ENCODE measurements at regions of chr1 and their contacts with region 1.

Region 1: DNA sequence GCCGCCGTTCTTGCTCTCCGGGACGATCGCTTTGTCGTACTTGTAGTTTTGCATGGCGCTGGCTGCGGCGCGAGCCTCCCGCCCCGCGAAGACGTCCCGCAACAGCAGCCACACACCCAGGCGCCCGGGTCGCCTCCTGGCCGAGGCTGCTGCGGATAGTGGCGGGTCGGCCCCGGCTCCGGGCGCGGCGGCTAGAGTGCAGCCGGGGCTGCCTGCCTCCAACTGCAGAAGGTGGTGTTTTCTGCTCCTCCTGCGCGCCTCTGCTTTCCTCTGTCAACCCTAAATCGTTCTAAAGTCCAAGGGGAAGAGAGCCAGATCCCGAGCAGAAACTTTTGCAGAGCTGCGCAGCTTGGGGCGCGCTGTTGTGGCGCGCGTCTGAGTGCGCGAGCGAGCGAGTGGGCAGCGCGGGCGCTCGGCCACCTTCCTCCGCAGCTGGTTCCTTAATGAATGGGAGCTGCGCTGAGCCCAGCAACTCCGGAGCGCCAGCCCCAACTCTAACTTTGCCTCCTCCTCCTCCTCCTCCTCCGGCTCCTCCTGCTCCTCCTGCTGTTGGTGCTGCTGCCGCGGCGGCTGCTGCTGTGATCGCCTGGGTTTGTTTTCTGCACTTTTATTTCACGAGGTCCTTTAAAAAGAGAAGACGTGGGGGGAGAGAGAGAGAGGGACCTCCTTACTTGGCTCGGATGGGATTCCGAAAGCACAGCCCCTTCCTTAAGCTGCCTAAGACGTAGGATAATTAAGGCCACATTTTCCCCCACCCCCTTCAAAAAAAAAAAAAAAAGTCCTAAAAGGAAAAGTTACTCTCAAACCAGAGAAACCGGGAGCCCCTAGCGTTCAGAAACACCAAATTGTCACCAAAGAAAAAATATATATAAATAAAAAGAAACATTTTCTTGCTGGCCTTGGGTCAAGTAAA is at the start of gene PLPP3:
- DNase-seq: peak; percentile 78
- ATAC-seq: peak; percentile 83
- H3K4me3 Mint-ChIP-seq: peak within 1 kb of the TSS; percentile 96
- H3K27ac Mint-ChIP-seq: peak within 1 kb of the TSS; percentile 96
- H3K4me1 Mint-ChIP-seq: peaks cover 57% of the 10 kb centered on the region
- H3K27me3 Mint-ChIP-seq: no peaks in the 10 kb centered on the region
- CTCF ChIP-seq: no peak
- total RNA-seq, gene PLPP3: 28.2 to 31.0 TPM (median 28.8 TPM) in 3 replicates

Region 2: DNA sequence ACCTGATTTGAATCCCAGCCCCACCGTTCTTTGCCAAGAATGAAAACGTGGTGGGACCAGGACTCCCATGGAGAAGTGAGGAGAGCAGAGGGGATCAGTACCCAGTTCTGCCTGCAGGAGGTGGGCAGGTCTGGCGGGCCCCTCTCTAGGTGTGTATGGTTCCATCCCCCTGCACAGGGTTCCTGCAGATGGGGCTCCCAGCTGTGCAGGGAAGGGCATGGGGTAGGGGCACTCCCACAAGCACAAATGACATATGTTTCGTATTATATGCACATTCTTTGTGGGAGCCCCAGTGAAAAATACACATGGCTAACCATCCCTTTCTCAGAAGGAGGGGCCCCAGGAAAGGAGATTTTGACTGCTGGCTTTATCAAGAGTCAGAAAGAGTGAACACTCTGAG is 144.5 kb before region 1 on chr1:
- CTCF ChIA-PET with region 1: interaction called, 13 read pairs
- POLR2A ChIA-PET with region 1: interaction called, 5 read pairs
- DNase-seq: peak; percentile 30
- ATAC-seq: peak; percentile 35
- H3K4me3 Mint-ChIP-seq: no peak overlapping the region
- H3K27ac Mint-ChIP-seq: no peak overlapping the region
- H3K4me1 Mint-ChIP-seq: peaks cover 88% of the 10 kb centered on the region
- H3K27me3 Mint-ChIP-seq: peaks cover 52% of the 10 kb centered on the region
- CTCF ChIP-seq: 0 out of 2 replicates have a peak, but pooled peaks have one; percentile 29

Region 3: DNA sequence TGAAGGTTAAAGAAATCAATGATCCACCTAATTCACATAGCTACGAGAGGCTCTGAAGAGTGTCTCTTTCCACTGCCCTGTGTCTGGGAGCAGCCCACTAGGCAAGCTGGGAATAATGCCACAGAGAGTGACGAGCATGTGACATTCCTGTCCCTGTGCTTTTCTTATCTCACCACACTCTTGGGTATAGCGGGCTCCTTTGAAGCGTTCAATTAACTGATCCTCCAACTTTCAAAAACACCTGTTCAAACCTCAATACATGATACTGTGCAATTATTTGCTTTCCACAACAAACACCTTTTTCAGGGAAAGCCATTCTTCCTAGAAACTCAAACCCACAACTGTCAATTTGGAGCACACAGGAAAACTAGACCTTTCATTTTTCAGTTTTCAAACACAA is 43.3 kb before region 1 on chr1:
- CTCF ChIA-PET with region 1: interaction called, 16 read pairs
- POLR2A ChIA-PET with region 1: interaction called, 12 read pairs
- DNase-seq: no peak
- ATAC-seq: no peak; the same call in 1 of the 2 replicates
- H3K4me3 Mint-ChIP-seq: peak overlapping the region; percentile 33
- H3K27ac Mint-ChIP-seq: peak overlapping the region; percentile 99
- H3K4me1 Mint-ChIP-seq: no peaks in the 10 kb centered on the region; the same call in 1 of the 2 replicates
- H3K27me3 Mint-ChIP-seq: no peaks in the 10 kb centered on the region
- CTCF ChIP-seq: no peak

Region 4: DNA sequence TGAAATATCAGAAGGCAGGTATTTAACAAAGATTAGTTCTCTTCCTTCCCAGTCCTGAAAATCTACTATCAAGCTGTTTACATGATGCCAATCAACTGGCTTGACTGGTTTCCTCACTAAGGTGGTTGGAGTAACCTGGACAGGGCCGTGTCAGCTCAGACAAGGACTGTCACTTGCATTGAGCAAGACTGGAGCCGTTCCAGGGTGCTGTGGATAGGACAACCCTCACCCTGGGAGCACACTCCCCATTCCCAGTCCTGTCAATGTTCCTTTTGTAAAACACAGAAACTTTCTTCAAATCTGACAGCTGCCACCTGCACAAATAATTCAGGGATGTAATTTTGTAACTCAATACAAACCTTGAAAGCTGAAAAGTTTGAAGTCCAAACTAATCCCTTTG is 31.3 kb before region 1 on chr1:
- CTCF ChIA-PET with region 1: interaction called, 3 read pairs
- POLR2A ChIA-PET with region 1: interaction called, 10 read pairs
- DNase-seq: no peak
- ATAC-seq: no peak
- H3K4me3 Mint-ChIP-seq: peak overlapping the region; percentile 34
- H3K27ac Mint-ChIP-seq: peak overlapping the region; percentile 78
- H3K4me1 Mint-ChIP-seq: peaks cover 86% of the 10 kb centered on the region
- H3K27me3 Mint-ChIP-seq: no peaks in the 10 kb centered on the region
- CTCF ChIP-seq: no peak

Region 5: GRCh38 chr1:56627636-56628039 is 48.4 kb after region 1 on chr1:
- CTCF ChIA-PET with region 1: no interaction called
- POLR2A ChIA-PET with region 1: no interaction called
- DNase-seq: no peak
- ATAC-seq: peak; percentile 47; the same call in 1 of the 2 replicates
- H3K4me3 Mint-ChIP-seq: no peak overlapping the region
- H3K27ac Mint-ChIP-seq: no peak overlapping the region
- H3K4me1 Mint-ChIP-seq: peaks cover 28% of the 10 kb centered on the region
- H3K27me3 Mint-ChIP-seq: no peaks in the 10 kb centered on the region
- CTCF ChIP-seq: no peak

Region 6: DNA sequence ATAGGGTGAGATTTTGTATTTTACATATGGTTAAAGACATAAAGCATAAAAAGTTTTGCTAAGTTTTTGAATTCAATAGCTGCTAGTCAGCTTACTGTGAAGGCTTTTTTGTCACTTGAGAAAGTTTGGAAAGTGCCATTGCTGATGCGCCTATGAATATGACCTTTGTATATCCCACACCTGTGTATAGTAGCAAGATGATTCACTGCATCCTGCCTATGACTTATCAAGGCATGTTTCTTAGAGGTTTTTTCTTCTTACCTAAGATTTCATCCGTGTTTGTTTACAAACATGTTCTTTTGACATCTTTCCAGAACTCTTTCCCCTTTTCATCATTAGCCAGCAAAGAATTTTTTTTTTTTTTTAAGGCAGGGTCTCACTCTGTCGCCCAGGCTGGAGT is 117.4 kb after region 1 on chr1:
- CTCF ChIA-PET with region 1: no interaction called
- POLR2A ChIA-PET with region 1: no interaction called
- DNase-seq: no peak
- ATAC-seq: no peak
- H3K4me3 Mint-ChIP-seq: no peak overlapping the region
- H3K27ac Mint-ChIP-seq: no peak overlapping the region
- H3K4me1 Mint-ChIP-seq: no peaks in the 10 kb centered on the region
- H3K27me3 Mint-ChIP-seq: no peaks in the 10 kb centered on the region
- CTCF ChIP-seq: no peak